ENCODE measurements at regions of chr3 and their contacts with region 1.

Region 1: DNA sequence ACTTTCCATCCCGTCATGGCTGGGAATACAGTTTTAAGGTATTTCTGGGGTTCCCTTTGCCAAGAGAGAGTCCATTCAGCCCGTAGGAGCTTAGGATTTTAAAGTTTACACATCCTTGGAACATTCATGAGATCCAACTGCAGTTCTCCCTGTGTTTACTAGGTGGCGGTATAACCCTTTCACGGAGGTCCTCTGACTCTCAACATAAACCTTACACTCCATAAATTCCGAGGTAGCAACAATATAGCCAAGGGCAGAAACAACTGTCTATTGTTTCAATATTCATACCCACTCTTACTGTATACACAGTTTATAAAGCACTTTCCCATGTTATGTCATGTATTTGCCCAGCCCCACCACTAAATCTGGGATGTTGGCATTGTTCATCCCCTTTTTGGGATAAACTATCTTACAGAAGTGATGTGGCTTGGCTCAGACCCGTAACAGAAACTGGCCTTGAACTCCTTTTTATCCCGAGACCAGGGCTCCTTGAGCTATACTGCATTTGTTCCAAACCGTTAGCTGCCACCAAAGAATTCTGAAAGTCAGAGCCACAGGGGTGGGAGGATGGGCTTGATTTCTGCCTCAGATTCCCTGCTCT is 69.2 kb upstream of the COL6A5 start:
- DNase-seq: peak; percentile 50
- H3K4me3 Mint-ChIP-seq: no peak overlapping the region
- H3K27ac Mint-ChIP-seq: no peak overlapping the region
- H3K4me1 Mint-ChIP-seq: no peaks in the 10 kb centered on the region
- H3K27me3 Mint-ChIP-seq: peaks cover 54% of the 10 kb centered on the region
- CTCF ChIP-seq: peak; percentile 88

Region 2: DNA sequence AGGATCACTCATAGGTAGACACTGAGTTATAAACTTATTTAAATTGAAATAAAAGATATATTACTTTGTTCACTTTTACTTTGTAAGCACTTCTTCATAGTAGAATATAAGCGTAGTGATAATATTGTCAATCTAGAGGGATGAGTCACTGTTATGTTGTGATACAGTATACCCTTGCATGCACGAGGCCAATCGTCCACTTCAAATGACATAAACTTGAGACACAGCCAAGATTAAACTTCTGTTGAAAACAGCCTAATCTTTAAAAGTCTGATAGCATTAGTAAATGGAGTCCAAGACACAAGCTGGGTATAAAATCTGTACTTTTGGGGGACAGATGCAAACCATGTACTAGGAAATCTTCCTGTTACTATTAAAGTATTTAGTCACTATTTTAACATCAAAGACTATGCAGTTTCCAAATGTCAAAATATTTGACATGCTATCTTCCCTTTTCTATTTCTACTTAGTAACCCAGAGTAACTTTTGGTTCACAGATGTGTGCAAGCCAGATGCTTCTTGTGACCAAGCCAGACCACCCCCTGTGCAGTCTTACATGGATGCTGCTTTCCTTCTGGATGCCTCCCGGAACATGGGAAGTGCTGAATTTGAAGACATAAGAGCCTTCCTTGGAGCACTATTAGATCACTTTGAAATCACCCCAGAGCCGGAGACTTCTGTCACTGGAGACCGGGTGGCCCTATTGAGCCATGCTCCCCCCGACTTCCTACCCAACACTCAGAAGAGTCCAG is 385.0 kb after region 1 on chr3:
- CTCF ChIA-PET with region 1: no interaction called
- intact Hi-C with region 1: loop called (anchors 10 kb)
- DNase-seq: no peak
- H3K4me3 Mint-ChIP-seq: no peak overlapping the region
- H3K27ac Mint-ChIP-seq: no peak overlapping the region
- H3K4me1 Mint-ChIP-seq: peaks cover 6% of the 10 kb centered on the region
- H3K27me3 Mint-ChIP-seq: no peaks in the 10 kb centered on the region
- CTCF ChIP-seq: no peak

Measured in Calu3 (cell line).